Colonic mucosa (tissue), 4 donors: ENCODE measurements at regions of chr6 and their contacts with region 1.

Region 1: GRCh38 chr6:28355743-28356665 is 6.3 kb downstream of the ZKSCAN3 start:
- DNase-seq: peak; percentile 91
- H3K4me3 ChIP-seq: peak overlapping the region; percentile 50
- H3K27ac ChIP-seq: peak overlapping the region; percentile 85
- H3K4me1 ChIP-seq: peaks cover 4% of the 10 kb centered on the region
- H3K27me3 ChIP-seq: no peaks in the 10 kb centered on the region
- CTCF ChIP-seq: peak; percentile 69

Region 2: DNA sequence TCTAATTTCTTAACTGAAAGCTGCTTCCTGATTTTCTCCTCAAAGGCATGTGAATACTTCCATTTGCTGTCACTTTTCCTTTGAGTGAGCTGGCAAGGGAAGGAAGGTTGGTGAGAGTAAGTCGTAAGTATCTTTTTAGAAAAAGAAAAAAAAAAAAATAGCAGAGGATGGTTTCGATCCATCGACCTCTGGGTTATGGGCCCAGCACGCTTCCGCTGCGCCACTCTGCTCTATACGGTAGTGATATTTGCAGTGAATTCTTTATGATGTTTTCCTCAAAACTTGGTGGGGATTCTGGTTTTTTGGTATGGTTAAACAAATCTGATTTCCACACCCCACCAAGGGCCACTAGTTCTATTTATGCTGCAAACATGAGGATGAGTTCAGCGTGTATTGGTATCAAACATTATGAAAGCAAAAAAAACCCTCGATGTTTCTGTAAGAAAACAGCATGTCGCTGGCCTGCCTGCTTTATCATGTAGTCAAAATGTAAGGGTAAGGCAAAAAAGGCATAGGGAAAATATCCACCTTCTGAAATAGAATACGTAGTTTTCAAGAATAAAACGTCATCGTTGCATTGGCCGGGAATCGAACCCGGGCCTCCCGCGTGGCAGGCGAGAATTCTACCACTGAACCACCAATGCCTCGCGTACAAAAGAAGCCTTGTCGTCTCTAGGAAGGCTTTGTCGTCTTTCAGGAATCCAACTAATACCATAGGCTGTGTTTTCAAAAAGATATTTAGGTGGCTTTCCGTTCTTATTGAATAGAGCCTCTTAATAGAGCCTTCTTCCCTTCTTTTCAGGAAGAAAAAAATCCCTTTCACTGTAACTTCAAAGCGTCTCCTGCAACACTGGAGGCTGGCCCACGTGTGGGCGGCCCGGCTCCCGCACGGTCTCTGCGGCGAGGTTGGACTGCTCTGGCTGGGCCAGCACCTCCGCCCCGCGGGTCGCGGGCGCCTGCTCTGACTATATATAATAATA is 453.4 kb before region 1 on chr6:
- intact Hi-C with region 1: loop called (anchors 10 kb)
- DNase-seq: peak; percentile 92
- H3K4me3 ChIP-seq: peak overlapping the region; percentile 55
- H3K27ac ChIP-seq: peak overlapping the region; percentile 28
- H3K4me1 ChIP-seq: no peaks in the 10 kb centered on the region
- H3K27me3 ChIP-seq: no peaks in the 10 kb centered on the region
- CTCF ChIP-seq: no peak

Region 3: DNA sequence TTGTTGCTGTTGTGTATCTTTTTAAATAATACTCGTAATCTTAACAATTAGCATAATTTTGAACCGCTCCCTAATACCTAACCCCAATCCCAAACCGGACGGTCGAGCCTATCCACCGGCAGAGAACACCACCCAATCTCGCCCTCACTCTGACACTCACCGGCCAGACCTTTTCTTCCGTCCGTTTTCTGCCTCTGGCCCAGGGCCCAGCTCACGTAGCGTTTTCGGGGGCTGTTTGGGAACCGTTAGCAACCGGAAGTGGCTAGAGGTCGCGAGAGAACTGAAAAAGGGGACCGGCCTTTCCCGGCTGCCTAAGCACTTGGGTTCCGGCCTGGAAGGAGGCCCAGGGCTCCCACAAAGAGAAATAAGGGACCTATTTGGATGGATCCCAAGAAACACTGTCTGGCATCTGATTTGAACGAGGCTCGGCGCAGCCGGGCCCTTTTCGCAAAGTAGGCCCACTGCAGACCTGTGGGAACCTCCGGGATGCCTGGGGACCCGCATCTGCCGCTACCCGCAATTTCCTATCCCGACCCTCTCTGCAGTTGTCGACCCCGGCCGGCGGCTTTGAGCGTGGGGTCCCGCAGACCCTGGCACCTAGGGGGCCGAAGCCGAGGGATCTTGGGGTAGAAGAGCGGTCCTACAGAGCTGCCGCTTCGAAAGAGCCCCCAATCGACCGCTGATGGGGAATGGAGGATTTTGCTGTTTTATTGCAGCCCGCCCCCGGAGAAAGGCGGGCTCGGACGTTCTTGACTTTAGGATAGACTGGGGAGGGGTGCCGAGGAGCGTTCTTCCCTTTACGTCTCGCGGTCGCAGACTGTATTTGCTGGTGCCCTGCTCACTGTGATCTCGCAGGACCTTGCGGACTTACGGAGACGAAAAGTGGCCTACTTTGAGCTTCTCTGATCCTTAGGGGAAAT is 219.2 kb before region 1 on chr6:
- intact Hi-C with region 1: loop called (anchors 5 kb)
- DNase-seq: peak; percentile 85
- H3K4me3 ChIP-seq: peak overlapping the region; percentile 91
- H3K27ac ChIP-seq: peak overlapping the region; percentile 81
- H3K4me1 ChIP-seq: peaks cover 5% of the 10 kb centered on the region
- H3K27me3 ChIP-seq: no peaks in the 10 kb centered on the region
- CTCF ChIP-seq: no peak

Region 4: GRCh38 chr6:28225056-28225834 is 130.8 kb before region 1 on chr6 and contains the start of gene ZSCAN9:
- intact Hi-C with region 1: loop called (anchors 10 kb)
- DNase-seq: peak; percentile 79
- H3K4me3 ChIP-seq: peak within 1 kb of the TSS; percentile 79
- H3K27ac ChIP-seq: peak within 1 kb of the TSS; percentile 47
- H3K4me1 ChIP-seq: peaks cover 5% of the 10 kb centered on the region
- H3K27me3 ChIP-seq: no peaks in the 10 kb centered on the region
- CTCF ChIP-seq: no peak
- total RNA-seq, gene ZSCAN9: 8.9 to 9.8 TPM